Breast epithelium (tissue), 4 donors: ENCODE measurements at regions of chr10 and their contacts with region 1.

Region 1: DNA sequence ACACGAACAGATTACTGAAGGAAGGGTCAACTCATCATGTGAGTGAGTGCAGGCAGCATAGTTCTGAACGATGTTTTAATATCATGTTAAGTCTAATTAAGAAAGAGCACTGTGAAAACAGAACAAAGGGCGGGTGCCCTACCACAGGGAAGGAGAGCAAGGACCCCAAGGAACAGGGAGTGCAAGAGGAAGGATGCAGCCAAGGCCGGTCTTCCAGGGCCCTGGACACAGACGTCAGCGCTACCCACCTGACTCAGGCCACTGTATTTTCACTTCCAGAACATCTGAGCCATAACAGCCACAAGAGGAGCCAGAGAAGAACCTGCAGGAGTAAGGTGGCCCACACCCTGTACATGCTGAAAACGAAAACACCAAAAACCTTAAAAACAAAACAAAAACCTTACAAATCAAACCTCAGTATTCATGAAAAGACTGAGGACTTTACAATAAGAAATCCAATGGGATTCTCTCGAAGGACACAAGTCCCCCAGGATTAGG is 506.1 kb upstream of the AKR1E2 start:
- DNase-seq: no peak
- H3K4me3 ChIP-seq: no peak overlapping the region
- H3K27ac ChIP-seq: no peak overlapping the region
- H3K4me1 ChIP-seq: no peaks in the 10 kb centered on the region
- H3K27me3 ChIP-seq: no peaks in the 10 kb centered on the region
- CTCF ChIP-seq: no peak
- POLR2A ChIP-seq: no peak

Region 2: DNA sequence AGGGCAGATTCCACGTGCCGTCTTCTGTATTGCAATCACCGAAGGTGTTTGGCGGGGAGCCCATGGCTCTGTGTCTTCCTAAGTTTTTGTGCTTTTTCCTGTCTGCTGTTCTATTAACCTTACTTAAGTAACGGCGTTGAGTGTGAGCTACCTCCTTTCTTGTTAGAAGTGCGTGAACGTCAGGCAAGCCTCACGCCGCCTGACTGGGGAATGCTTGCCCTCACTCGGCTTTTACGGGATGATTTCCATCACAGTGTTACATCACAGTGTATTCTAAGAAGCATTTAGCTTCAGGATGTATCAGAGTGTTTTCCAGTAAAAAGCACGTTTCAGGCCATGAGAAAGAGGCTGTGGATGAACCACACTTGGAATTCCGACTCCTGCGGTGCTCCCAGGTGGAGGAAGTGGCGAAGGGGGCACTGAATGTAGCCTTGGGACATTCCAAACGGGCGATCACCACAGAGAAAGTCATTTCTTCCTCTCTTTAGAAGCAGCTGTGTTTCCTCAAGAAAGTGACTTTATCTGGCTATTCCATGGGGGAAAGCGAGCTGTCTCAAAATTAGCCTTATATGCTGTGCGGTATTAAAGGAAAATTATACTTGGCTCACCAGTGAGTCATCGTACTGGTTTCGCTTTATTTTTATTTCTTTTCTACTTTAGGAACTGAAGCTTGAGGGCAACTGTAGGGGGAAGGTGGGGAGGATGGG is 825.6 kb before region 1 on chr10:
- intact Hi-C with region 1: no loop called
- DNase-seq: no peak
- H3K4me3 ChIP-seq: no peak overlapping the region
- H3K27ac ChIP-seq: peak overlapping the region; percentile 28 to 48
- H3K4me1 ChIP-seq: no peaks in the 10 kb centered on the region
- H3K27me3 ChIP-seq: no peaks in the 10 kb centered on the region
- CTCF ChIP-seq: no peak
- POLR2A ChIP-seq: no peak

Region 3: GRCh38 chr10:4303048-4303447 is 16.9 kb before region 1 on chr10:
- intact Hi-C with region 1: loop called (anchors 1 kb)
- DNase-seq: no peak
- H3K4me3 ChIP-seq: no peak overlapping the region
- H3K27ac ChIP-seq: no peak overlapping the region
- H3K4me1 ChIP-seq: no peaks in the 10 kb centered on the region
- H3K27me3 ChIP-seq: no peaks in the 10 kb centered on the region
- CTCF ChIP-seq: no peak
- POLR2A ChIP-seq: no peak